ENCODE measurements at regions of chr3 and their contacts with region 1.

Region 1: GRCh38 chr3:101643861-101644613 is 32.9 kb downstream of the ZBTB11 start:
- DNase-seq: peak; percentile 69
- H3K4me3 Mint-ChIP-seq: no peak overlapping the region
- H3K27ac Mint-ChIP-seq: peak overlapping the region; percentile 83
- H3K4me1 Mint-ChIP-seq: peaks cover 24% of the 10 kb centered on the region
- H3K27me3 Mint-ChIP-seq: no peaks in the 10 kb centered on the region

Region 2: GRCh38 chr3:100463002-100463401 is 1181.0 kb before region 1 on chr3:
- CTCF ChIA-PET with region 1: interaction called, 6 read pairs
- intact Hi-C with region 1: loop called (anchors 10 kb)
- DNase-seq: peak; percentile 27
- H3K4me3 Mint-ChIP-seq: no peak overlapping the region
- H3K27ac Mint-ChIP-seq: no peak overlapping the region
- H3K4me1 Mint-ChIP-seq: peaks cover 5% of the 10 kb centered on the region
- H3K27me3 Mint-ChIP-seq: peaks cover 3% of the 10 kb centered on the region

Region 3: DNA sequence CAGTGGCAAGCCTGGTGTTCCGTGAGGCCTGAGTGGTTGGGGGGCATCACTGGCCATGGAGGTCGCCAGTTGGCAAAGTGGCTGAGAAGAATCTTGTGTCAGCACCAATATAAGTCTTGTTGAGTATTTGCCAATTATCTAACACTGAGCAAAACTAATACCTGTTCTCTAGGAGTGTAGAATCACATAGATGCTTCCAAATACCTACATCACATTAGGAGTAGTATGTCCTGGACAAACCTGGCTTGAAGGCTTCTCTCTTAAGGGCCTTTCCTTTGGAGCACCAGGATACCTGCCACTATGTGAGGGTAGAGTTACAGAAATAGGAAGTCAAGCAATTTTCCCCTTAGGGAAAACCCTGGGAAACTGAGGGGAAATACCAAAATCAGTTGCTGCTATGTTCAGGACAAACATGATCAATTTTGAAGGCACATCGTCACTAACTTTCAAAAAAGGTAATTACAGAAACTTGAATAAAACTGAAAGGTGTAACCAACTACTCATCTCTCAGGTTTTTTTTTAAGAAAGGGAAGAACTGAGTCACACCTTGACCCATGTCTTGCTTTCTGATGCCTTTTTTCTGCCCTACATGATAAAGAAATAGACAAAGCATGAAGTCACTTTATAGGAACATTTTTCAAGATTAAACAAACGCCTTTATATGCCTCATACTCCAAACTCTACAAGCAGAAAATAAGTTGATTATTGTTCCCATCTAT is 424.0 kb before region 1 on chr3:
- CTCF ChIA-PET with region 1: no interaction called
- intact Hi-C with region 1: loop called (anchors 1 kb)
- DNase-seq: peak; percentile 8
- H3K4me3 Mint-ChIP-seq: no peak overlapping the region
- H3K27ac Mint-ChIP-seq: peak overlapping the region; percentile 61
- H3K4me1 Mint-ChIP-seq: peaks cover 16% of the 10 kb centered on the region
- H3K27me3 Mint-ChIP-seq: no peaks in the 10 kb centered on the region

Region 4: GRCh38 chr3:101588616-101589015 is 55.4 kb before region 1 on chr3:
- CTCF ChIA-PET with region 1: no interaction called
- intact Hi-C with region 1: no loop called
- DNase-seq: no peak
- H3K4me3 Mint-ChIP-seq: no peak overlapping the region
- H3K27ac Mint-ChIP-seq: no peak overlapping the region
- H3K4me1 Mint-ChIP-seq: peaks cover 20% of the 10 kb centered on the region
- H3K27me3 Mint-ChIP-seq: no peaks in the 10 kb centered on the region

Region 5: GRCh38 chr3:101676765-101677435 is 32.9 kb after region 1 on chr3 and contains the start of gene ZBTB11:
- CTCF ChIA-PET with region 1: interaction called, 4 read pairs
- intact Hi-C with region 1: loop called (anchors 1 kb)
- DNase-seq: peak; percentile 100
- H3K4me3 Mint-ChIP-seq: peak within 1 kb of the TSS; percentile 87
- H3K27ac Mint-ChIP-seq: peak within 1 kb of the TSS; percentile 95
- H3K4me1 Mint-ChIP-seq: peaks cover 54% of the 10 kb centered on the region
- H3K27me3 Mint-ChIP-seq: no peaks in the 10 kb centered on the region
- total RNA-seq, gene ZBTB11: 31.2 to 31.7 TPM